MCF 10A (cell line): ENCODE measurements at regions of chr22 and their contacts with region 1.

Region 1: DNA sequence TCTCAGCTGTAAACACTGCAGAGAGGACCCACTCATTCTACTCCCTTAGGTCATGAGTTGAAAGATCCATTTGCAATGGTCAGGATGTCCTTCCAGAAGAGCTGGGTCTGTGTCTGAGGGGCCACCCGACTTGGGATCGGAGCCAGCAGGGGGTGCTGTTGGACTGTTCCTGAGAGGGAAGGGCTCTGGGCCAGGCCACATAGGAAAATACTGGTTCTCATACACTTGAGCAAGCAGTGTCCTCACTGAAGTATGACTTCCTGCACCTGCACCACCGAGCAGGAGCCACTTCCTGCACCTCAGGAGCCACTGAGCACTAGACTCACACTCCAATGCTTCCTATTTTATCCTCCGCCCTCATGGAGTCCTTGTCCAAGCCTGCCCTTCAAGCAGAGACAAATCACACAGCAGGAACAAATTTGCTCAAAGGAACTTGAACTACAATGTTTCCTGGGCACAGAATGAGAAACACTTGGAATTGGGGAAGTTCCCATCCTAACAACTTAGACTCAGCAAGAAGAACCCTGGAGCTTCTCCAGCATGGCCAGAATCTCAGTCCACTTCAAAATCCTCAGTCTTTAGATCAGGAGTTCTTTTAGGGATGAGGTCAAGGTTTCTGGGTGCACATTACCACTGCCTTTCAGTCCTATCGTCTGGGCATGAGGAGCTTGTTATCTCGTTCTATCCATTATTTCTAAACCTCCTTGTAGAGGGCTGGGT is 36.6 kb upstream of the VPREB1 start:
- DNase-seq: peak; percentile 81
- H3K4me3 Mint-ChIP-seq: no peak overlapping the region
- H3K27ac Mint-ChIP-seq: no peak overlapping the region
- H3K4me1 Mint-ChIP-seq: peaks cover 18% of the 10 kb centered on the region
- H3K27me3 Mint-ChIP-seq: no peaks in the 10 kb centered on the region
- CTCF ChIP-seq: peak; percentile 76

Region 2: GRCh38 chr22:21961886-21962654 is 245.9 kb before region 1 on chr22:
- CTCF ChIA-PET with region 1: no interaction called
- POLR2A ChIA-PET with region 1: no interaction called
- intact Hi-C with region 1: no loop called
- DNase-seq: peak; percentile 71
- H3K4me3 Mint-ChIP-seq: no peak overlapping the region
- H3K27ac Mint-ChIP-seq: no peak overlapping the region
- H3K4me1 Mint-ChIP-seq: no peaks in the 10 kb centered on the region
- H3K27me3 Mint-ChIP-seq: no peaks in the 10 kb centered on the region
- CTCF ChIP-seq: no peak

Region 3: GRCh38 chr22:22235558-22235957 is 27.6 kb after region 1 on chr22:
- CTCF ChIA-PET with region 1: interaction called, 8 read pairs
- POLR2A ChIA-PET with region 1: no interaction called
- intact Hi-C with region 1: loop called (anchors 1 kb)
- DNase-seq: peak; percentile 49
- H3K4me3 Mint-ChIP-seq: no peak overlapping the region
- H3K27ac Mint-ChIP-seq: no peak overlapping the region
- H3K4me1 Mint-ChIP-seq: no peaks in the 10 kb centered on the region
- H3K27me3 Mint-ChIP-seq: peaks cover 8% of the 10 kb centered on the region
- CTCF ChIP-seq: peak; percentile 46

Region 4: DNA sequence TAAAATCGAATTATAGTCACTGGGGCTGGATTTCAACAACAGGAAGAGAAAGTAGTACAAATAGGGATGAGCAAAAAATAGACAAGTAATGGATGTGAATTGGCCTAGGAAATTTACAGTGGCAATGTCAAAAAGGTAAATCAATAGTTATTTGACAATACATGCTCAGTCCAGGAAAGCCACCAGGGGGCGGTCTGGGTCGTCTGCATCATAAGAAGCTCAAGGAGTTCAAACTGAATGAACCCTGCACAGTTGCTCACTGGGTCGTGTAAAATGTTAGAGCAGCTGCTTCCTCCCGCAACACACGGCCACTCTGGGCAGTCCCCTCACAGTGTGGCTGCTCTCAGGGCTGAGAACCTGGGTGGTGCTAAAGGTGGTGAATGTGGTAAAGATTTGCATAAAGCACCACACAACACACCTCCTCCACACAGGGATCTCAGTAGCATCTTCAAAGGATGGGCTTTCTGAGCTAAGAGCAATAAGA is 214.7 kb after region 1 on chr22:
- CTCF ChIA-PET with region 1: interaction called, 5 read pairs
- POLR2A ChIA-PET with region 1: interaction called, 4 read pairs
- intact Hi-C with region 1: loop called (anchors 1 kb)
- DNase-seq: peak; percentile 66
- H3K4me3 Mint-ChIP-seq: no peak overlapping the region
- H3K27ac Mint-ChIP-seq: no peak overlapping the region
- H3K4me1 Mint-ChIP-seq: no peaks in the 10 kb centered on the region
- H3K27me3 Mint-ChIP-seq: peaks cover 90% of the 10 kb centered on the region
- CTCF ChIP-seq: peak; percentile 77

Region 5: GRCh38 chr22:22673628-22674027 is 465.6 kb after region 1 on chr22:
- CTCF ChIA-PET with region 1: no interaction called
- POLR2A ChIA-PET with region 1: no interaction called
- intact Hi-C with region 1: no loop called
- DNase-seq: no peak
- H3K4me3 Mint-ChIP-seq: no peak overlapping the region
- H3K27ac Mint-ChIP-seq: no peak overlapping the region
- H3K4me1 Mint-ChIP-seq: no peaks in the 10 kb centered on the region
- H3K27me3 Mint-ChIP-seq: peaks cover 71% of the 10 kb centered on the region
- CTCF ChIP-seq: no peak